ENCODE measurements at regions of chr20 and their contacts with region 1.

Region 1: GRCh38 chr20:16719421-16719820 is 10.4 kb upstream of the SNRPB2 start:
- DNase-seq: no peak
- H3K4me3 ChIP-seq: no peak overlapping the region
- H3K27ac ChIP-seq: no peak overlapping the region
- H3K4me1 ChIP-seq: no peaks in the 10 kb centered on the region
- H3K27me3 ChIP-seq: peaks cover 48% of the 10 kb centered on the region
- CTCF ChIP-seq: no peak
- EP300 ChIP-seq: no peak
- POLR2A ChIP-seq: no peak

Region 2: GRCh38 chr20:16678779-16679178 is 40.6 kb before region 1 on chr20:
- in situ Hi-C with region 1: no loop called
- intact Hi-C with region 1: loop called (anchors 1 kb)
- DNase-seq: no peak
- H3K4me3 ChIP-seq: no peak overlapping the region
- H3K27ac ChIP-seq: no peak overlapping the region
- H3K4me1 ChIP-seq: no peaks in the 10 kb centered on the region
- H3K27me3 ChIP-seq: no peaks in the 10 kb centered on the region
- CTCF ChIP-seq: no peak
- EP300 ChIP-seq: no peak
- POLR2A ChIP-seq: no peak

Measured in transverse colon (tissue), 4 donors.